Left cardiac atrium (tissue), 4 donors: ENCODE measurements at regions of chr17 and their contacts with region 1.

Region 1: DNA sequence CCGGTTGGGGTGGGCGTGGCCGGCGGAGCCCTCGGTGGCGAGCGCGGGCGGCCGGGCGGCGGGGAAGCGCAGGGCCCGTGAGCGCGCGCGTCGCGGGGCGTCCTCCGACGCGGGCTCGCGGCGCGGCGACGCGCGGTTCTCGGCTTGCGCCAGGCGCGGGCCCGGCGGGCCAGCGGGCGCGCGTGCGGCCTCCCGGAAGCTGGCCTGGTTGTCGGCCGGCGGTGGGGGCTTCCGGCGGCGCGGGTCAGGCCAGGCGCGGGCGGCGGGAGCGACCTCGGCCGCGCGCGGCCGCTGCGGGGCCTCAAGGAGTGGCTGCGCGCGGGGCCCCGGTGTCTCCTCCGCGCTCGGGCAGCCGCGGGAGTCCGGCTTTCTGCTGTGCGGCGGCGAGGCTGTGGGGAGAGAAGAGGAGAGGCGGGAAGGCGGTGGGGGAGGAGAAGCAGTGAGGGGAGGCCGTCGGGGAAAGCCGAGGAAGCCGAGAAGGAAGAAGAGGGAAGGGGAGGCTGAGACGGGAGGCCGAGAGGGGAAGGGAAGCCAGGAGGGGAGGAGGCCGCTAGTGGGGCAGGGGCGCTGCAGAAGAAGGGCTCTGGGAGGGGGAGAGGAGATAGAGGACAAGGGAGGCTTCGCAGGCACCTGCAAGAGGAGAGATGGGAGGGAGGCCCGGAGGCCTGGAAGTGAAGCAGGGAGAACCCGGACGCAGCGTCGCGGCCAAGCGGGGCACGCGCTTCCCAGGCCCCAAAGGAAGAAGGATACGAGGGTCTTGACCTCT is 2.5 kb downstream of the C17orf58 start:
- DNase-seq: peak; percentile 87
- ATAC-seq: peak; percentile 79 to 89

Region 2: DNA sequence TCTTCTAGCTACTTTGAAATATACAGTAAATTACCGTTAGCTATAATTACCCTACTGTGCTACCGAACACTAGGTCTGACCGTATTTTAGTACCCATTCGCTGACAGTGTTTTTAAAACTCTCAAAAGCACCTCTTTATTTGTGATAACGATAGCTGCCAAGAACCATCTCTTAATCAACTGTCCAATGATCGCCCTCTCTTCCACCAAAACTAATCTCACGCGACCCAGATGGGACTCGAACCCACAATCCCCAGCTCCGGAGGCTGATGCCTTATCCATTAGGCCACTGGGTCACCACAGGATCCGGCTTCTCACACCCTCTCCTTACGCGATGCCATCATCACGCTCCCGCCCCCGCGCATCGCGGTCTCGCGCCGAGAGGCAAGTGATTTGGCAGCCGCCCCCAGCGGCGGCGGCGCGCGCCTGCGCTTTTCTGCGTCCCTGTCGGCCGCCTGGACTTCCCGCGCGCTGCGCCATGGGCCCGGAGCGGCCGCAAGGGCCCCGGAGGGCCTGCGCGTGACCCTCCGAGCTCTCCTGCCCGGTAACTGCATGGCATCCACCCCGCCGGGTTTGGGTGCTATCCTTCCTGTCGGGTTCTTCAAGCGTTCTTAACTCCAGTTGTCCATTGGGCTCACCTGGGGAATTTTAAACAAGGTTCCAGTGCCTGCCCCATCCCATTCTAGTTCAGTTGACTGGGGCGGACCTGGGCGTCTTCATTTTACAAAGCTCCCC is 26.1 kb after region 1 on chr17:
- intact Hi-C with region 1: loop called in 1 of 2 experiments (anchors 2 kb)
- DNase-seq: peak; percentile 94
- ATAC-seq: peak; percentile 96 to 98

Region 3: GRCh38 chr17:68141050-68141449 is 147.3 kb after region 1 on chr17:
- intact Hi-C with region 1: no loop called
- DNase-seq: no peak
- ATAC-seq: no peak